GM10248 (cell line): ENCODE measurements at regions of chrX and their contacts with region 1.

Region 1: GRCh38 chrX:46912098-46912602 is at the start of gene JADE3:
- DNase-seq: peak; percentile 41
- CTCF ChIP-seq: peak; percentile 6

Region 2: GRCh38 chrX:46929439-46930261 is 17.5 kb after region 1 on chrX:
- CTCF ChIA-PET with region 1: interaction called, 10 read pairs
- POLR2A ChIA-PET with region 1: no interaction called
- DNase-seq: no peak
- CTCF ChIP-seq: no peak

Region 3: GRCh38 chrX:46978341-46979291 is 66.5 kb after region 1 on chrX:
- CTCF ChIA-PET with region 1: interaction called, 10 read pairs
- POLR2A ChIA-PET with region 1: no interaction called
- DNase-seq: peak; percentile 53
- CTCF ChIP-seq: peak; percentile 71